ENCODE measurements at regions of chr11 and their contacts with region 1.

Region 1: DNA sequence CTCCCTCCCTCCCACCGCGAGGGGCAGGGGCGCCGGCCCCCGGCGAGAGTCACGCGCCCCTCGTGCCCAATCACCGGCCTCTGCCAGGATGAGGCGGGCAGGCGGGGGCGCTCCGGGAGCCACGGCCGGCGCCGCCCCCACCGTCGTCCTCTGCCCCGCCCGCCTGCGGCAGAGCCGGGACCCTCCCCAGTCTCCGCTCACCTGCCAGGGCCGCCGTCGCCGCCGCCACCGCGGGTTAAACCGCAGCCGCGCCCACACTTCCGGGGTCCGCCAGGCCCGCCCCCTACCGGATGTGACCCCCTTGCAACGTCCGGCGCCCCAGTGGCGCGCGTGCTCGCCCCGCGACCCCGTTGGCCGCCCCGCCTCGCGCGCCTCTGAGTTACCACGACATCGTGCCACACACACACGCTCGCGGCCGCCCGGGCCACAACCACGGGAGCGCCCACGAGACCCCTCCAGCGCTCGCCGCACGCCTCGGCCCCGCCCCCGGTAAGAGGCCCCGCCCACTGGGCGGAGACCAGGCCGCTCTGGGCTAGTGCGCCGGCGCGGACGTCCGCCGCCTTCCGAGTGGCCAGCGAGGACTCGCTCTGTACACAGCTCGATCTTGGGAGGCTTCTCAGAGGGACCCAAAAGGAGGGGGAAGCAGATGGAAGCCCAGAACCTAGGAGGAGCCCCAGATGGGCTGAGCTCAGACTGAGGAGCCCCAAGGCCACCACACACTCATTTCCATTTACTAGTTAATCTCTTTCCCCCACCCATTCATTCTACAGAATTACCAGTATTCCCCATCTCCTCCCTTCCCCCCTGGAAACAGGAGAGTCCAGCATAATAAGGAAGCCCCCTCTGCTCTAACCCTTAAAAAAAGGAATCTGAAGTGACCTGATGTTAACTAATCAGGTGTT is at the start of gene VPS37C:
- DNase-seq: peak; percentile 85 to 97 (median 91)
- ATAC-seq: peak; percentile 73
- H3K4me3 ChIP-seq: peak within 1 kb of the TSS; percentile 63 to 65
- H3K4me3 Mint-ChIP-seq: peak within 1 kb of the TSS; percentile 87
- H3K27ac ChIP-seq: peak within 1 kb of the TSS; percentile 58 to 88
- H3K27ac Mint-ChIP-seq: peak within 1 kb of the TSS; percentile 94
- H3K4me1 ChIP-seq: peaks cover 16% of the 10 kb centered on the region
- H3K4me1 Mint-ChIP-seq: peaks cover 53% of the 10 kb centered on the region
- H3K27me3 ChIP-seq: no peaks in the 10 kb centered on the region
- H3K27me3 Mint-ChIP-seq: peaks cover 2% of the 10 kb centered on the region
- CTCF ChIP-seq: no peak
- total RNA-seq, gene VPS37C: 2.1 to 2.2 TPM

Region 2: GRCh38 chr11:60841797-60842667 is 319.4 kb before region 1 on chr11 and contains the start of gene CCDC86:
- CTCF ChIA-PET with region 1: no interaction called
- POLR2A ChIA-PET with region 1: no interaction called
- intact Hi-C with region 1: loop called (anchors 1 kb)
- DNase-seq: peak; percentile 97 to 100 (median 98)
- ATAC-seq: peak; percentile 97
- H3K4me3 ChIP-seq: peak within 1 kb of the TSS; percentile 84 to 93
- H3K4me3 Mint-ChIP-seq: peak within 1 kb of the TSS; percentile 93
- H3K27ac ChIP-seq: peak within 1 kb of the TSS; percentile 71 to 83
- H3K27ac Mint-ChIP-seq: peak within 1 kb of the TSS; percentile 97
- H3K4me1 ChIP-seq: peaks cover 35% of the 10 kb centered on the region
- H3K4me1 Mint-ChIP-seq: peaks cover 46% of the 10 kb centered on the region
- H3K27me3 ChIP-seq: no peaks in the 10 kb centered on the region
- H3K27me3 Mint-ChIP-seq: no peaks in the 10 kb centered on the region
- CTCF ChIP-seq: no peak
- total RNA-seq, gene CCDC86: 10.8 to 11.9 TPM

Region 3: GRCh38 chr11:60985991-60986915 is 175.2 kb before region 1 on chr11:
- CTCF ChIA-PET with region 1: no interaction called
- POLR2A ChIA-PET with region 1: no interaction called
- intact Hi-C with region 1: loop called in 1 of 2 experiments (anchors 5 kb)
- DNase-seq: peak; percentile 81 to 99 (median 92)
- ATAC-seq: peak; percentile 86
- H3K4me3 ChIP-seq: peak overlapping the region; percentile 7 to 17
- H3K4me3 Mint-ChIP-seq: peak overlapping the region; percentile 68
- H3K27ac ChIP-seq: peak overlapping the region; percentile 72 to 86
- H3K27ac Mint-ChIP-seq: peak overlapping the region; percentile 96
- H3K4me1 ChIP-seq: peaks cover 83% of the 10 kb centered on the region
- H3K4me1 Mint-ChIP-seq: peaks cover 90% of the 10 kb centered on the region
- H3K27me3 ChIP-seq: no peaks in the 10 kb centered on the region
- H3K27me3 Mint-ChIP-seq: no peaks in the 10 kb centered on the region
- CTCF ChIP-seq: no peak

Region 4: DNA sequence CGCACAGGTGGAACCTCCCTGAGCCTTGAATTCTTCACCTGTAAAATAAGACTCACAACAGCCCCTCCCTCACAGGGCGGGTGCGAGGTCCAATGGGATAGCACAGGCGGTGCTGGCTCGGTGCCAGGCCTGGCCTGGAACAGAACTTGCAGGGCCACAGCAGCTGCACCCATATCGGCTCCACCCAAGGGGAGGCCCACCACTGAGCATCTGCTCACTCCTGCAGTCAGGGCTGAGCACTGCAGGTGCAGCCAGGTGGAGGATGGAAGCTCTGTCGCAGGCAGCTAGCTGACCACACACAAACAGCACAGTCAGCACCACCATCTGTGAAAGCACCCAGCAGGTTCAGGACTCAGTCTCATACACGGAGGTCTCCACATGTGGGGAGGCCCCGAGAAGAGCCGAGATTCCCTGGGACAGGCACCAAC is 19.8 kb before region 1 on chr11:
- CTCF ChIA-PET with region 1: interaction called, 4 read pairs
- POLR2A ChIA-PET with region 1: no interaction called
- intact Hi-C with region 1: loop called in 1 of 2 experiments (anchors 1 kb)
- DNase-seq: no peak
- ATAC-seq: no peak
- H3K4me3 ChIP-seq: no peak overlapping the region
- H3K4me3 Mint-ChIP-seq: no peak overlapping the region
- H3K27ac ChIP-seq: no peak overlapping the region
- H3K27ac Mint-ChIP-seq: no peak overlapping the region
- H3K4me1 ChIP-seq: peaks cover under 1% of the 10 kb centered on the region
- H3K4me1 Mint-ChIP-seq: peaks cover 9% of the 10 kb centered on the region
- H3K27me3 ChIP-seq: no peaks in the 10 kb centered on the region
- H3K27me3 Mint-ChIP-seq: no peaks in the 10 kb centered on the region
- CTCF ChIP-seq: no peak

Region 5: DNA sequence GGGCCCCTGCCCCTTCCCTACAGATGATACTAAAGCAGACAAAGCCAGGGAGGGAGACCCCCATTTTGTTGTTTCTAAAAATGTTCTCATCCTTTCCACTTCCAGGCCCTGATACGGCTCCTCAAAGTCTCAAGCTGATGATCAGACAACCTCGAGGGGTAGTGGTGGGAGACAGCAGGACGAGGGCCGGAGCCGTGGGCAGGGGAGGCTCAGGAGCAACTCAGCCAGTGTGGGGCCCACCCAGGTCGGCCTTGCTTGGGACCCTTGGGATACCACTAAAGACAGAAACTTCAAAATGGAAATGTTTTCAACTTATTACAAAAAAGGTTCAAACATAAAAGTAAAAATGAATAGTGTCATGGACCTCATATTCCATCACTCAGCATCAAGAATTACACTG is 15.0 kb after region 1 on chr11:
- CTCF ChIA-PET with region 1: no interaction called
- POLR2A ChIA-PET with region 1: no interaction called
- intact Hi-C with region 1: no loop called
- DNase-seq: no peak
- ATAC-seq: no peak
- H3K4me3 ChIP-seq: no peak overlapping the region
- H3K4me3 Mint-ChIP-seq: no peak overlapping the region
- H3K27ac ChIP-seq: no peak overlapping the region
- H3K27ac Mint-ChIP-seq: no peak overlapping the region
- H3K4me1 ChIP-seq: peaks cover 13% of the 10 kb centered on the region
- H3K4me1 Mint-ChIP-seq: peaks cover 16% of the 10 kb centered on the region
- H3K27me3 ChIP-seq: no peaks in the 10 kb centered on the region
- H3K27me3 Mint-ChIP-seq: peaks cover 5% of the 10 kb centered on the region
- CTCF ChIP-seq: no peak

Region 6: DNA sequence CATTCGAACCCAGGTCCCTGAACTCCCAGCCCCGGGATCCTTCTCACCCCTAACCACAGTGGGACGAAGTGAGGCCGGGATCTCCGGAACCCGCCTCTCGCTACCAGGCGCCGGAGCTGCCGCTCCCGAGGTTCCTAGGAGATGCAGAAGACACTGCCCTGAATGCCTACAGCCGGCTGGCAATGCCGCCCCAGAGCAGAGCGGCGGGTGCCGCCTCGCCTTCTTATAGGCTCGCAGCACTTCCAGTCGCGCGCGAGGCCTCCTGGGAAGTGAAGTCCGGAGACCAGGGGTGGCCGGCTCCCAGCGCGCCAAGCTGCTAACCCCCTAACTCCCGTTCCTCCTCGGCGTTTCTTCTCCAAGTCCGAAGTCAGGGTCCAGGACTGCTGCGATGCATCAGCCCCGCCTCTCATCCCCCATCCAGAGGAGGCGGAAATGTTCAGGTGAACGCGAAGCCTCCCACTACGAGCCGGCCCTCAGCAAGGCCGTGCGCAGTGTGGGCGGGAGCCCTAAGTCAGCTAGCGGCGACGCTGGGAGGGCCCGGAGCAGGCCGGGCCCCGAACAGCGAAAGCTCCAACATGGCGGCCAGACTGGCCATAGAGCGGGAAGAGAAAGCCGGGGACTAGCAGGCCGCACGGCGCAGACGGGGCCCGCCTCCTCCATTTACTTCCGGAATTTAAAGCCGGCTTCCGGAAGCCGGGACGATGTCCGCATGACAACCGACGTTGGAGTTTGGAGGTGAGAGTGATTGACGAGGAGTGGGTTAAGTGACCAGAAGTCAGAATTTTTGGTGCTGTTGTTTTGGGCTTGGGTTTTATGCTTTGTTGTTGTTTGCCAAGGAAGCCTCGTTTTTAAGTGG is 200.5 kb after region 1 on chr11 and contains the starts of genes CYB561A3 and TMEM138:
- CTCF ChIA-PET with region 1: no interaction called
- POLR2A ChIA-PET with region 1: no interaction called
- intact Hi-C with region 1: loop called in 1 of 2 experiments (anchors 1 kb)
- DNase-seq: peak; percentile 68 to 93 (median 87)
- ATAC-seq: peak; percentile 84
- H3K4me3 ChIP-seq: peak within 1 kb of the TSS; percentile 94 to 98
- H3K4me3 Mint-ChIP-seq: peak within 1 kb of the TSS; percentile 98
- H3K27ac ChIP-seq: peak within 1 kb of the TSS; percentile 87 to 98
- H3K27ac Mint-ChIP-seq: peak within 1 kb of the TSS; percentile 98
- H3K4me1 ChIP-seq: peaks cover 20% of the 10 kb centered on the region
- H3K4me1 Mint-ChIP-seq: peaks cover 37% of the 10 kb centered on the region
- H3K27me3 ChIP-seq: no peaks in the 10 kb centered on the region
- H3K27me3 Mint-ChIP-seq: no peaks in the 10 kb centered on the region
- CTCF ChIP-seq: no peak
- total RNA-seq, gene CYB561A3: 23.1 to 28.1 TPM
- total RNA-seq, gene TMEM138: 60.7 to 62.5 TPM